Activated CD4-positive, alpha-beta T cell treated with anti-CD3 and anti-CD28 coated beads for 36 hours (primary cell): ENCODE measurements at regions of chr7 and their contacts with region 1.

Region 1: DNA sequence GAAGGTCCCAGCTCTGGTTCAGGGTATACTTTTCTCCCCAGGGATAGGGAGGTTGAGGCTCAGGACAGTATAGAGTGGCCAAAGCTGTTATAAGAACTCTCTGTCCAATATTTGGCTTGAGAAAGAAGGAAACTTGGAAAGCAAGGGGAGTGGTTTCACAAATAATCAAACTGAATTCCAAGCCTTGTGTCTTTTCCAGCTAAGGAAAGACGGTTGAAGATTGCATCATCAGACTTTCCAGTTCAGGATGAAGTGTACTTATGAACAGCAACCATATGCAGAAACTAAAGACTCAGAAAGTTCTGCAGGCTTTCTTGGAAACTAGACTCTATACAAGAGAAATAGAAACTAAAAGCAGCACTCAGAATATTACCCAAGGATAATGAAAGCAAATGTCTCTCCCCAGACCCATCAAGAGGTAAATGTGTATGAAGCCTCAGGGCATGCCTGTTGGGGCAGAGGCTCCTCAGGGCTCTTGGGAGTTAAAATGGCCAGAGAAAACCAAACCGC is 46.4 kb downstream of the RAMP3 start:
- DNase-seq: peak; percentile 20
- ATAC-seq: peak; percentile 97
- H3K4me3 Mint-ChIP-seq: no peak overlapping the region
- H3K27ac Mint-ChIP-seq: peak overlapping the region; percentile 77
- H3K4me1 Mint-ChIP-seq: peaks cover 32% of the 10 kb centered on the region
- H3K27me3 Mint-ChIP-seq: peaks cover 8% of the 10 kb centered on the region

Region 2: GRCh38 chr7:45157653-45158401 is 46.2 kb before region 1 on chr7 and contains the start of gene RAMP3:
- CTCF ChIA-PET with region 1: interaction called, 3 read pairs
- POLR2A ChIA-PET with region 1: no interaction called
- intact Hi-C with region 1: loop called in 1 of 2 experiments (anchors 5 kb)
- DNase-seq: no peak
- ATAC-seq: no peak
- H3K4me3 Mint-ChIP-seq: no peak within 1 kb of the TSS
- H3K27ac Mint-ChIP-seq: no peak within 1 kb of the TSS
- H3K4me1 Mint-ChIP-seq: no peaks in the 10 kb centered on the region
- H3K27me3 Mint-ChIP-seq: peaks cover 16% of the 10 kb centered on the region
- total RNA-seq, gene RAMP3: not detected